ENCODE measurements at regions of chr6 and their contacts with region 1.

Region 1: DNA sequence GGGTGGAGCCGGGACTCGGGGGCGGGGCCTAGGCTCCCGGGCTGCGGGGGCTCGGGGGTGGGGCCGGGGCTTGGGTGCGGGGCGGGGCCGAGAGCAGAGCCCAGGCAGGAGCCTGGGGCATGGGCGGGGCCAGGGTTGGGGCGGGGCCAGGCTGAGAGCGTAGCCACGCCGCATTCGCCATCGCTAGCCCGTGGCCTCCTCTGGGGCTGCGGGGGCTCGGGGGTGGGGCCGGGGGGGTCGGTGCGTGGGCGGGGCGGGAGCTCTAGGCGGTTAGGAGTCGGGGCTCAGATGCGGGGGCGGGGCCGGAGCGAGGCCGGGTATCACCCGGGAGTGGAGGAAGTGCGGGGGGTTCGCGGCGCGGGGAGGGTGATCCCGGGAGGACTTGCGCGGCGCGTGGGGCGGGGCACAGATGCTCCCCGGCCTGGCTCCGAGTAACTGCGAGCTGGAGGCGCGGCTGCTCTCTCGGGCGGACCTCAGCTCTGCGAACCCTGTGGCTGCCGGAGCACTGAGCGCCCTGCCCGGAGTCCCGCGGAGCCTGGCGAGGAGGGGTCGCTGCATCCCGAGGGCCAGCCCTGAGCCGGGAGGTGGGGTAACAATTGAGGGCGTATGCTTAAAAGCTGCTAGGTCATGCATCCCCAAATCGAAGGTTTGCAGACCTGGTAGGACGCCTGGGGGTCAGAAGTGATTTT is 434 bp upstream of the ECI2 start:
- DNase-seq: peak; percentile 78 to 97 (median 91)
- ATAC-seq: peak; percentile 87 to 92 (median 90)
- H3K4me3 ChIP-seq: peak overlapping the region; percentile 58 to 74
- H3K4me3 Mint-ChIP-seq: peak overlapping the region; percentile 80 to 91 (median 86)
- H3K27ac ChIP-seq: peak overlapping the region; percentile 27
- H3K27ac Mint-ChIP-seq: peak overlapping the region; percentile 82 to 89
- H3K4me1 ChIP-seq: peaks cover 12 to 17% of the 10 kb centered on the region in 2 experiments
- H3K4me1 Mint-ChIP-seq: peaks cover 38 to 48% (median 44%) of the 10 kb centered on the region in 3 donors
- H3K27me3 ChIP-seq: no peaks in the 10 kb centered on the region
- H3K27me3 Mint-ChIP-seq: no peaks in the 10 kb centered on the region

Region 2: DNA sequence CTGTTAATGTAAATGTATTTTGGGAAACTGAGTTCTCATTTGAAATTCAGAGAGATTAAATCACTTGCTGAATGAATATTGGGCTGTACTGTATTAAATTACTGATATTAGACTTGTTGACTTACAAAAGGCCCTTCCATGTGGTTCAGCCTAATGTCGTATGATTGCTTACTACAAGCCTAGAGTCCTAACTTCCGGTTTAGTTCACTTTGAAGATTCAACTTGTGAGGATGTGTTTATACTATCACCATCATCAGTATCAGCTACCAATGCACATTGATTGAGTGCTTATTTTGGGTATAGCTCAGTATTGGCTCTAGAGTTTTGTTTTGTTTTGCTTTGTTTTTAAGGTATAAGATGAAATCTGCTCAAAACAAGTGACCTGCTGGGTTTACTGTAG is 105.1 kb before region 1 on chr6:
- CTCF ChIA-PET with region 1: no interaction called
- POLR2A ChIA-PET with region 1: interaction called, 8 to 21 read pairs
- DNase-seq: peak in 1 of 35 experiments; percentile 47
- ATAC-seq: peak in 3 of 4 experiments; percentile 57 to 72 (median 71)
- H3K4me3 ChIP-seq: no peak overlapping the region
- H3K4me3 Mint-ChIP-seq: peak overlapping the region in 1 of 3 donors; percentile 34
- H3K27ac ChIP-seq: no peak overlapping the region
- H3K27ac Mint-ChIP-seq: peak overlapping the region; percentile 19 to 70
- H3K4me1 ChIP-seq: peaks cover 16 to 26% of the 10 kb centered on the region in 2 experiments
- H3K4me1 Mint-ChIP-seq: peaks cover 76 to 82% (median 78%) of the 10 kb centered on the region in 3 donors
- H3K27me3 ChIP-seq: no peaks in the 10 kb centered on the region
- H3K27me3 Mint-ChIP-seq: no peaks in the 10 kb centered on the region

Region 3: DNA sequence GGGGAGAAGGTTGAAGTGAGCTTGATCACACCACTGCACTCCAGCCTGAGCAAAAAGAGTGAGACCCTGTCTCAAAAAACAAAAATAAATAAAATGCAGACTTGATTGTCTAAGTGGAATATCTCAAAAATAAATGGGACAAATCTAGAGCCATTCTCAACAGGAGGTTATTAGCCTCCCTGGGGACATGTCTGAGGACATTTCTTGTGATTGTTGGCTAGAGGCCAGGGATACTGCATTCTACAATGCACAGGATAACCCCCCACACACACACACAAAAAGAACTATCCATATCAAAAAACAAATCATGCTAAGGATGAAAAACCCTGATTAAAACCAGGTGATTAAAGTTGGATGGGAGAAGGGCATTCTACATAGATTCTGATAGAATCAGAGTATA is 94.3 kb before region 1 on chr6:
- CTCF ChIA-PET with region 1: no interaction called
- POLR2A ChIA-PET with region 1: no interaction called
- DNase-seq: no peak
- ATAC-seq: no peak
- H3K4me3 ChIP-seq: no peak overlapping the region
- H3K4me3 Mint-ChIP-seq: no peak overlapping the region
- H3K27ac ChIP-seq: no peak overlapping the region
- H3K27ac Mint-ChIP-seq: peak overlapping the region in 1 of 2 donors; percentile 56
- H3K4me1 ChIP-seq: peaks cover 0 to 4% of the 10 kb centered on the region in 2 experiments
- H3K4me1 Mint-ChIP-seq: peaks cover 22 to 33% (median 29%) of the 10 kb centered on the region in 3 donors
- H3K27me3 ChIP-seq: no peaks in the 10 kb centered on the region
- H3K27me3 Mint-ChIP-seq: no peaks in the 10 kb centered on the region

Measured in T-cell (primary cell).